ENCODE measurements at regions of chr13 and their contacts with region 1.

Region 1: GRCh38 chr13:47545201-47546024 is 455.7 kb downstream of the SUCLA2 start:
- DNase-seq: no peak
- H3K4me3 ChIP-seq: no peak overlapping the region
- H3K27ac ChIP-seq: no peak overlapping the region
- H3K4me1 ChIP-seq: no peaks in the 10 kb centered on the region
- H3K27me3 ChIP-seq: no peaks in the 10 kb centered on the region
- CTCF ChIP-seq: no peak
- EP300 ChIP-seq: no peak
- POLR2A ChIP-seq: no peak

Region 2: DNA sequence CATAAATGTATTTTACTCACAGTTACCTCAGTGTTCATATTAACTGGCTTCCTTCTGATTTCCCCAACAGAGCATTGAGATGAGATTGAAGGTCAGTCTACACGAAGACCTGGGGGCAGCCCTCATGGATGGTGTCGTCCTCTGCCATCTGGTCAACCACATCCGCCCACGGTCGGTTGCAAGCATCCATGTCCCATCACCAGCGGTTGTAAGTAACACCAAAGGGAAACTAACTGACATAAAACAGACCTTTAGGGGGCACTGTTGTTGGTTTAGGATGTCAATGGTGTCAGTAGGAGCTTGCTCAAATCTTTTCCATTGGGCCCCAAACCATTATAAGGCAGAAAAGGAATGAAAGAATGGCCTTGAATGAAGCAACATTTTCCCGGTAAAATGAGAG is 816.6 kb before region 1 on chr13:
- intact Hi-C with region 1: no loop called
- DNase-seq: no peak
- H3K4me3 ChIP-seq: no peak overlapping the region
- H3K27ac ChIP-seq: no peak overlapping the region
- H3K4me1 ChIP-seq: no peaks in the 10 kb centered on the region
- H3K27me3 ChIP-seq: no peaks in the 10 kb centered on the region
- CTCF ChIP-seq: no peak
- EP300 ChIP-seq: no peak
- POLR2A ChIP-seq: no peak

Region 3: GRCh38 chr13:47480121-47480520 is 65.3 kb before region 1 on chr13:
- intact Hi-C with region 1: loop called in 1 of 4 experiments (anchors 2 kb)
- DNase-seq: no peak
- H3K4me3 ChIP-seq: no peak overlapping the region
- H3K27ac ChIP-seq: no peak overlapping the region
- H3K4me1 ChIP-seq: no peaks in the 10 kb centered on the region
- H3K27me3 ChIP-seq: no peaks in the 10 kb centered on the region
- CTCF ChIP-seq: no peak
- EP300 ChIP-seq: no peak
- POLR2A ChIP-seq: no peak

Measured in ovary (tissue), 10 donors.